Transverse colon (tissue), 4 donors: ENCODE measurements at regions of chr1 and their contacts with region 1.

Region 1: GRCh38 chr1:86846166-86846647 is 67.7 kb downstream of the SELENOF start:
- DNase-seq: no peak
- H3K4me3 ChIP-seq: no peak overlapping the region
- H3K27ac ChIP-seq: no peak overlapping the region
- H3K4me1 ChIP-seq: no peaks in the 10 kb centered on the region
- H3K27me3 ChIP-seq: no peaks in the 10 kb centered on the region
- CTCF ChIP-seq: no peak
- EP300 ChIP-seq: no peak
- POLR2A ChIP-seq: no peak

Region 2: DNA sequence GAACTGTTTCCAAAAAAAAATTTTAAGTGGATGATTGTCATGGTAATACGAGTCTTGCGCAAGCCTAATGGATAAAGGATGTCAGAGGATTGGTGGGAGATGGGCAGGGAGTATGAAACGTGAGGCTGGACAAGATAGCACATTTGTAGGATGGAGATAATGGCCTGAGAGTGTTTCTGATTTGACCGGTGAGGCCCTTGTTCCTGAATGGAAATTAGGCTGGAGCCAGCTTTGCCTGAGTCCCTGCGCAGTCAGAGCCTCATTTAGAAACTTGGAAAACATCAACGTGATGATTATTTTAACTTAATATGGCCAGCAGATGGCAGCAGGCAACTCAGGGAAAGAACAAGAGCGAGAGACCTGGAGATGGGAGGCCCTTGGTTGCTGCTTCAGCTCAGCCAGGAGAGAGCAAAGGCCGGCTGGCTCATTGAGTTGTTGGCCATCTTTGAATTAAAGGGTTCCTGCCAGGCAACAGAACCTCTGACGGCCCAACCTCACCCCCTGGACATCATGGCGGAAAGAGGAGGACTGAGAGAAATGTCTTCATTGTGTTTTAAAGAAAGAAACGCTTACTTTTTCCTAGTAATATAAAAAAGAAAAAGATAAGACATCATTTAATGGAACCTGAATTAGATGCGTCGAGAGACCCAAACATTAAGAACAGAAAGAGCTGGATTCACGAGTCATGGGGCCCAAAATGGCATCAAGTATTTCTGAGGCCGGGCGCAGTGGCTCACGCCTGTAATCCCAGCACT is 12.6 kb before region 1 on chr1:
- in situ Hi-C with region 1: no loop called
- intact Hi-C with region 1: no loop called
- DNase-seq: peak; percentile 78
- H3K4me3 ChIP-seq: no peak overlapping the region
- H3K27ac ChIP-seq: no peak overlapping the region
- H3K4me1 ChIP-seq: peaks cover 0 to 8% (median 0%) of the 10 kb centered on the region in 4 donors
- H3K27me3 ChIP-seq: no peaks in the 10 kb centered on the region
- CTCF ChIP-seq: peak; percentile 54 to 66 (median 58)
- EP300 ChIP-seq: no peak
- POLR2A ChIP-seq: no peak

Region 3: DNA sequence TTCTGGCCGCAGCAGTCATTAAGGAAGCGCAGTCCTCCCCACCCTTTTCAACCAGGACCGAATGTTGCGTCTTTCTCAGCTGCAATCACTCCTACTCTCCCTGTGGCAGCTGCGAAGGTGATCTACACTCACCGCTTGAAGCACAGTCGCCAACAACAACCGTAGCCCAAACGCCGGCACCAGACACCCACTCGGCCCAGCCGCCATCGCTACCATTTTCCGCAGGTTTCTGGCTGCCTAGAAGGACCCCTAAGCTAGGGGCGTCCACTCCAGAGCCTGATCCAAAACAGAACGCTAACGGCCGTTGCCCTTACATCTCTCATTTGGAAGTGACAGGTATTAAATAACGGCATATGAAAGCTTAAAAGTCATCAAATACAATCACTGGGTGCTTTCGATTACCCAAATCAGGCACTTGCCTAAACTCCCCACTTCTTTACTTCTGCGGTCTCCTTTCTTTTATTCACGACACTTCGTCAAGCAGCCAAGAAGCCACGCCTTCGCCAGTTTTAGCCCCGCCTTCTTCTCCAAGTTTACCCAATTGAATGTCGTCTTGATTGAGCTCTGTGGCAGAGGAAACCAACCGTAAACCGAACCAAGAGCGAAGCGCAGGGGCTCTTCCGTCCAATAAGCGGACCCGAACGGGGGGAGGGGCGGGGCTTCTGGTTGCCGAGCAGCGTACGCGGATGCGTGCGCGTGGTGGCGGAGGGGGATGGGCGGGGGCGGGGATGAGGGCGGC is 67.9 kb after region 1 on chr1 and contains the start of gene SELENOF:
- in situ Hi-C with region 1: no loop called
- intact Hi-C with region 1: no loop called
- DNase-seq: peak; percentile 99
- H3K4me3 ChIP-seq: peak within 1 kb of the TSS; percentile 77 to 100 (median 96)
- H3K27ac ChIP-seq: peak within 1 kb of the TSS; percentile 89 to 96 (median 92)
- H3K4me1 ChIP-seq: peaks cover 12 to 34% (median 21%) of the 10 kb centered on the region in 4 donors
- H3K27me3 ChIP-seq: no peaks in the 10 kb centered on the region
- CTCF ChIP-seq: no peak
- EP300 ChIP-seq: no peak
- POLR2A ChIP-seq: peak; percentile 46
- total RNA-seq, gene SELENOF: 32.0 to 130 (median 77.9) TPM

Region 4: DNA sequence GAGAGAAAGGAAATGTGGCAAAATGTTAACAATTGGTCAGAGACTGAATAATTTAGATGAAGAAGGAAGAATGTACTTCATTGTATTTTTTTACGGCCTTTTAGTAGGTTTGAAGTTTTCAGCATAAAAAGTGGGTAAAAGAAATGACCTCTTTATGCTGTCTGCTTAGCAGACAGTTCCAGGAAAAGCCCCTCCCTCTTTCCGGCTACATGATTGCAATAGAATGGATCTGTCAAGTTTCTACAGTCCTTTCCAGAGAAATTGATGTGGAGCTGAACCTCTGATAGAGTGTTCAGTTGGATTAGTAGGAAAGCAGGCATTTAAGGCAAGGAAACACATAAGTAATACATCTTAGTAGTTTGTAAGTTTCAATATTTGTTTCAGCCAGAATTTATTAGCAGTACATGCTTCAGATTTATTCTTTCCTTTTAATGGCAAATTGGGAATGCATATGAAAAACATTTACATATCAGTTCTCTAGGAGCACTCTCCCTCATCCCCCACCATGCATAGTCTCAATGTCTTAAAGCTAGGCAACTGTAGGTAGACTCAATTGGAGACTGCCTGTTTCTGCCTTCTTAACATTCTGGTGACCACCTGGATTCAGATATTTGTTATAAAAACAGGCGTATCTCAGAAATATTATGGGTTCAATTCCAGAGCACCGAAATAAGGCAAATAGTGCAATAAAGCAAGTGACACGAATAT is 104.7 kb after region 1 on chr1:
- in situ Hi-C with region 1: loop called in 3 of 4 experiments (anchors 10 to 25 kb)
- intact Hi-C with region 1: no loop called
- DNase-seq: no peak
- H3K4me3 ChIP-seq: no peak overlapping the region
- H3K27ac ChIP-seq: no peak overlapping the region
- H3K4me1 ChIP-seq: no peaks in the 10 kb centered on the region
- H3K27me3 ChIP-seq: no peaks in the 10 kb centered on the region
- CTCF ChIP-seq: no peak
- EP300 ChIP-seq: no peak
- POLR2A ChIP-seq: no peak

Region 5: DNA sequence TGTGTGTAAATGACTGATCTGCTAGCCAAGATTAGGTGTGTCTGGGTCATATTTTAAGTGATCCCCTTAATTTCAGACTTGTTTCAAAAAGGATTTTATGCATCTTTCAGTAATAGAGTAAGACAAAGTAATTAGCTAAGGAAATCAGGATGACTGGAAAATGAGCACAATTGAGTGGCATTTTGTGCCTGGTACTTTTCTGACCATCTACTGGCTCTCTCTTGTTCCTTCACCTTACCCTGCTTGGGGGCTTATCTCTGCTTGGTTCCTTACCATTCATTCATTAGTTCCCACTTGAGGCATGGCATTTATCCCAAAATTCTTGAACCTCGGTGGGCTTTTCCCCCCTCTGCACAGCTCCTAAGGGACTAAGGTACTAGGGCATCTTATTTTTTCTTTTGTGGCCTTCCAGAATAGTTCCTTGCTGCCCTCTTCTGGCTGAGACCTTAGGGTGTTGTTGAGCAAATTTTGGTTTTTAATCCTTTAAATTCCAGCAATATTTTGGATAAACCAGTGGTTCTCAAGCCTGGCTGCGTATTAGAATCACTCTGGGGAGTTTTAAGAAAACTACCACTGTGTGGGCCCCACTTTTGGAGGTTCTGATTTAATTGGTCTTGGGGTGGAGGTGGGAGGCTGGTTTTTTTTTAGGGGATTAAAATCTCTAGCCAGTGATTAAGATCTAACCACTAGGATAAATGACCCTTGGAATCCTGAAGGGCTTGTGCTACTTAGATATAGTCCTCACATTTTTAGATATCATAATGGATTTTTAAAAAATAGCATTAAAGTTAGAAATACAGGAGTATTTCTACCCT is 119.0 kb after region 1 on chr1:
- in situ Hi-C with region 1: loop called in 3 of 4 experiments (anchors 10 to 25 kb)
- intact Hi-C with region 1: no loop called
- DNase-seq: no peak
- H3K4me3 ChIP-seq: no peak overlapping the region
- H3K27ac ChIP-seq: no peak overlapping the region
- H3K4me1 ChIP-seq: no peaks in the 10 kb centered on the region
- H3K27me3 ChIP-seq: no peaks in the 10 kb centered on the region
- CTCF ChIP-seq: peak; percentile 50 to 57 (median 55)
- EP300 ChIP-seq: no peak
- POLR2A ChIP-seq: no peak